ENCODE measurements at regions of chr14 and their contacts with region 1.

Region 1: DNA sequence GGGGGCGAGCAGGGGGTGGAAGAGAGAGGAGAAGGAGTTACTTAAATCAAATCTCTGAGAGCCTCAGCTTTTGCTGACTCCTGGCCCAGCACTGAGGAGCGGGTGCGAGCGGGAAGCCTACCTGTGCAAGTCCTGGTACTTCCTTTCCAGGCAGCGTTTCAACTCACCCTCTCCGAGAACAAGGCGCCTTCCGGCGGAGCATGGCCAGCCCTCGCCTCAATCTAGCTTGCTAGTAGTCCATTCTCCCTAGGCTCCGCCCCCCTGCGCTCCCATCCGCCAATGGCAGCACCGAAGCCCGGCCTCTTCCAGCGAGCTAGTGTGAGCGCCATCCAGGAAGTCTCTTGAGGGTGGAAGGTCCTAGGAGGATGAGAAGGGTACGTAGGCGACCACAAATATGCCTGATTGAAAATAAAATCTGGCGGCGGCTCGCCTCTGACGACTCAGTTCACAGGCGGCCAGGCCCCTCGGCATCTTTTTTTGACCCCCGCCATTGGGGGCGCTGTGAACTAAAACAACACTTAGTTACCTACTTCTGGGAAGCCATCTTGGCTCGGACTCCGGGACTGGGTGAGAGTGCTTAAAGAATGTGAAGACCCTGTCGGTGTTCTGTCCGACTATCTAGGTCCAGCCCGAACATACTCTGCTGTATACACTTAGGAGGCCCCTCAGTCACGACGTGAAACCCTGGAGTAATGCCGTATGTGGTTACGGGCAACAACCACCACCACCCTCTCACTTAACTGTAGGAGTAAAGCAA is at the start of gene CHD8:
- DNase-seq: peak; percentile 91
- ATAC-seq: peak; percentile 97
- H3K4me3 Mint-ChIP-seq: peak within 1 kb of the TSS; percentile 98
- H3K27ac Mint-ChIP-seq: peak within 1 kb of the TSS; percentile 99
- H3K4me1 Mint-ChIP-seq: peaks cover 34% of the 10 kb centered on the region
- H3K27me3 Mint-ChIP-seq: no peaks in the 10 kb centered on the region
- CTCF ChIP-seq: no peak
- total RNA-seq, gene CHD8: 113 and 133 TPM in 2 replicates

Region 2: DNA sequence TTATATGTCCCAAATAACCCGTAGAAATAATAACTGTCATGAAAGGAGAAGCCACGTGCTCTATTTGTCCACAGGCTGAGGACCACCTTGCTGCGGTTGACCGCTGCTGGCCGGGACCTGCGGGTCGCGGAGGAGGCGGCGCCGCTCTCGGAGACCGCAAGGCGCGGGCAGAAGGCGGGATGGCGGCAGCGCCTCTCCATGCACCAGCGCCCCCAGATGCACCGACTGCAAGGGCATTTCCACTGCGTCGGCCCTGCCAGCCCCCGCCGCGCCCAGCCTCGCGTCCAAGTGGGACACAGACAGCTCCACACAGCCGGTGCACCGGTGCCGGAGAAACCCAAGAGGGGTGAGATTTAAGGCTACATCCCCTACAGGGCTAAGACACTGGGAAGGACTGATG is 155.2 kb before region 1 on chr14:
- CTCF ChIA-PET with region 1: no interaction called
- POLR2A ChIA-PET with region 1: no interaction called
- intact Hi-C with region 1: no loop called
- DNase-seq: peak; percentile 46
- ATAC-seq: peak; percentile 86
- H3K4me3 Mint-ChIP-seq: peak overlapping the region; percentile 74
- H3K27ac Mint-ChIP-seq: no peak overlapping the region
- H3K4me1 Mint-ChIP-seq: peaks cover 17% of the 10 kb centered on the region
- H3K27me3 Mint-ChIP-seq: no peaks in the 10 kb centered on the region
- CTCF ChIP-seq: no peak

Region 3: DNA sequence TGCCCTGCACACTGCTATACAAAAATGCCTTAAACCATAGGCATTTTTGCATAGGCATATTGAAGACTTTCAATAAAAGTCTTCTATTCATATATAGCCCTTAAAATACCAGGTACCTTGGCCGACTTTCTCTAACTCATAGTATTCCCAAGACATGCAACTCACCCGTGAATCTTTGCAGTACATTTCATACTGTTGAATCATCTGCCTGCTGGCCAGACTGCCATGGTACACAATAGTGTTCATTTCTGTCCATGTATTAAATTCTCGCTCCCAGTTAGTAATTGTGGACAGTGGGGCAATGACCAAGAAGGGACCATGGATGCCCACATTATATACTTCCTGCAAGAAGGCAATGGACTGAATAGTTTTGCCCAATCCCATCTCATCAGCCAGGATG is 47.9 kb before region 1 on chr14:
- CTCF ChIA-PET with region 1: no interaction called
- POLR2A ChIA-PET with region 1: interaction called, 10 read pairs
- intact Hi-C with region 1: no loop called
- DNase-seq: no peak
- ATAC-seq: no peak
- H3K4me3 Mint-ChIP-seq: no peak overlapping the region
- H3K27ac Mint-ChIP-seq: no peak overlapping the region
- H3K4me1 Mint-ChIP-seq: no peaks in the 10 kb centered on the region
- H3K27me3 Mint-ChIP-seq: no peaks in the 10 kb centered on the region
- CTCF ChIP-seq: no peak

Region 4: GRCh38 chr14:21437063-21437901 is 18.8 kb before region 1 on chr14:
- CTCF ChIA-PET with region 1: interaction called, 23 read pairs
- POLR2A ChIA-PET with region 1: interaction called, 139 read pairs
- intact Hi-C with region 1: loop called (anchors 1 kb)
- DNase-seq: peak; percentile 96
- ATAC-seq: peak; percentile 99
- H3K4me3 Mint-ChIP-seq: peak overlapping the region; percentile 84
- H3K27ac Mint-ChIP-seq: peak overlapping the region; percentile 87
- H3K4me1 Mint-ChIP-seq: peaks cover 56% of the 10 kb centered on the region
- H3K27me3 Mint-ChIP-seq: no peaks in the 10 kb centered on the region
- CTCF ChIP-seq: no peak

Region 5: DNA sequence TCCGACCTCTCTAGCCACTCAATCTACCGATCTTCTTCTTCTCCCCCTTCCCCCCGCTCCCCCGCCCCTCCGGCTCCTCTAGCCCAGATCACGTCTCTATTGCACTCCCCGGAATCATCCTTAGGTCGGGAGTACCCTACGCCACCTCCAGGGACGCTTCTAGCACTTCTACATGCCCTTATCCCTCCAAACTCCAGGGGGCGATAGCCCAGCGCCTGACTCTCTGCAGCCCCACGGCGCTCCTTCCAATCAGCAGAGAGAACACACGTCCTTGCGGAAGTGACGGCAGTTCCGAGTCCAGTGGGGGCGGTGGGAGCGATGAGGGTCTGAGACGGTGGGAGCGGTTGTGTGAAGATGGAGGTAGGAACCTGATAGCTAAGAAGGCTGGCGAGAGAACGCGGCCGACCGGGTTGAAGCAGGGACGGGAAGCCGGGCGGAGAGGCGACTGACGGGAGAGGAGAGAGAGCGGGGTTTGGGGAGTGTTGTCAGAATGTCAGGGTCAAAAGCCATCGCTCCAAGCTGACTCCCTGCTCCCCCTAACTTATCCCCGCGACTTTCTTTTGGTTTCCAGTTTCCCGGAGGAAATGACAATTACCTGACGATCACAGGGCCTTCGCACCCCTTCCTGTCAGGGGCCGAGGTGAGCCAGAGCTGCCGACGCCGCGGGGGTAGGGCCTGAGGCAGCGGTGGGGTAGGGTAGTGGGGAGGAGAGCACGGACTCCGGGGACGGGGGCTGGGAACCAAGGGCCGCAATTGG is 21.0 kb after region 1 on chr14 and contains the starts of genes RAB2B and TOX4:
- CTCF ChIA-PET with region 1: interaction called, 6 read pairs
- POLR2A ChIA-PET with region 1: interaction called, 35 read pairs
- intact Hi-C with region 1: loop called (anchors 1 kb)
- DNase-seq: peak; percentile 84
- ATAC-seq: peak; percentile 96
- H3K4me3 Mint-ChIP-seq: peak within 1 kb of the TSS; percentile 99
- H3K27ac Mint-ChIP-seq: peak within 1 kb of the TSS; percentile 95
- H3K4me1 Mint-ChIP-seq: peaks cover 37% of the 10 kb centered on the region
- H3K27me3 Mint-ChIP-seq: no peaks in the 10 kb centered on the region
- CTCF ChIP-seq: no peak
- total RNA-seq, gene RAB2B: 25.0 and 27.5 TPM in 2 replicates
- total RNA-seq, gene TOX4: 77.2 and 81.4 TPM in 2 replicates